ENCODE measurements at regions of chr2 and their contacts with region 1.

Region 1: GRCh38 chr2:88190808-88191721 is 20.9 kb downstream of the THNSL2 start:
- DNase-seq: peak in 3 of 6 donors; percentile 13 to 47 (median 28)
- ATAC-seq: peak; percentile 72 to 87 (median 76)
- H3K4me3 ChIP-seq: no peak overlapping the region
- H3K27ac ChIP-seq: no peak overlapping the region
- H3K4me1 ChIP-seq: no peaks in the 10 kb centered on the region
- H3K27me3 ChIP-seq: no peaks in the 10 kb centered on the region
- CTCF ChIP-seq: peak; percentile 15 to 54 (median 46)

Region 2: GRCh38 chr2:88451811-88452565 is 260.9 kb after region 1 on chr2:
- intact Hi-C with region 1: loop called in 1 of 3 experiments (anchors 5 kb)
- DNase-seq: peak; percentile 9 to 75 (median 31)
- ATAC-seq: peak; percentile 38 to 74 (median 59)
- H3K4me3 ChIP-seq: peak overlapping the region in 3 of 4 donors; percentile 10 to 45 (median 43)
- H3K27ac ChIP-seq: no peak overlapping the region
- H3K4me1 ChIP-seq: peaks cover 0 to 4% (median 0%) of the 10 kb centered on the region in 3 donors
- H3K27me3 ChIP-seq: peaks cover 4 to 35% (median 19%) of the 10 kb centered on the region in 4 donors
- CTCF ChIP-seq: no peak

Measured in pancreas (tissue), 10 donors.